ENCODE measurements at regions of chr3 and their contacts with region 1.

Region 1: DNA sequence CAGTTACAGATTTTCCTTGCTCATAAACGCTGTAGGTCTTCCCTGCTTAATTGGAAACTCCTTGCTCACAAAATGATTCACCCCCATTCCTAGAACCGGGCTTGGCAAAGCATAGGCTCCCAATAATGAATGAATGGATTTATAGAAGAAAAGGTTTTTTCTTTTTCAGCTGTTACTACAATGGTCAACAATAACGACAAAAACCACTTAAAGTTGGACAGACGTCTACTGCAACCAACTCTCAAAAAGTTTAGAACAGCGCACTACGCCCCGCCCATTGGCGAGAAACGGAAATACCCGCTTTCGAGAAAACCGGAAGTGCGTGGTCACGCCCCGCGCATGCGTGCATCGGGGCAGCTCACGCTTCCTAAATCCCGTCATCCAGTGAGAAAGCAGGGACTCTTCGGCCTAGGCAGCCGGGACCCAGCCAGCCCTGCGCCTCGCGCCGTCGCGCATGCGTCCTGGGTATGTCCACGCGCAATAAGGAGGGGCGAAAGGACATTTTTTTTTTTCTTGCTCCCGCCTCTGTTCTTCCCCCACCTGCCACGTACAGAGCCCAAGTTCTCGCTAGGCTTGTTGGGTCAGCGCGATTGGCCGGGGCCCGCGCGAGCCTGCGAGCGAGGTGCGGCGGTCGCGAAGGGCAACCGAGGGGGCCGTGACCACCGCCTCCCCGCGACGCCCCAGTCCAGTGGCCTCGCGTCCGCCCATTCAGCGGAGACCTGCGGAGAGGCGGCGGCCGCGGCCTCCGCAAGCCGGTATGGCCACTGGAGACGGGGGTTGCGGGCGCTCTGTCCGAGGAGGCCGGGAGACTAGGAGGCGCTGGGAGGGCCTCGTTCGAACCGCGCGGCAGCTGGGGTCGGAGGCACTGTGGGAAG is at the start of gene TFG:
- DNase-seq: peak; percentile 94 to 100 (median 96)
- ATAC-seq: peak; percentile 91
- H3K4me3 ChIP-seq: peak within 1 kb of the TSS; percentile 73
- H3K4me3 Mint-ChIP-seq: peak within 1 kb of the TSS; percentile 97
- H3K27ac ChIP-seq: peak within 1 kb of the TSS; percentile 77 to 94
- H3K27ac Mint-ChIP-seq: peak within 1 kb of the TSS; percentile 97
- H3K4me1 ChIP-seq: peaks cover 24% of the 10 kb centered on the region
- H3K4me1 Mint-ChIP-seq: peaks cover 49% of the 10 kb centered on the region
- H3K27me3 ChIP-seq: no peaks in the 10 kb centered on the region
- H3K27me3 Mint-ChIP-seq: peaks cover 16% of the 10 kb centered on the region
- CTCF ChIP-seq: no peak
- total RNA-seq, gene TFG: 56.5 to 58.8 TPM

Region 2: GRCh38 chr3:98901392-98902350 is 1807.5 kb before region 1 on chr3 and contains the start of gene DCBLD2:
- CTCF ChIA-PET with region 1: no interaction called
- POLR2A ChIA-PET with region 1: interaction called, 3 read pairs
- intact Hi-C with region 1: loop called in 1 of 2 experiments (anchors 5 kb)
- DNase-seq: peak; percentile 79 to 96 (median 88)
- ATAC-seq: peak; percentile 98
- H3K4me3 ChIP-seq: peak within 1 kb of the TSS; percentile 67
- H3K4me3 Mint-ChIP-seq: peak within 1 kb of the TSS; percentile 93
- H3K27ac ChIP-seq: peak within 1 kb of the TSS in 1 of 2 donors; percentile 45
- H3K27ac Mint-ChIP-seq: peak within 1 kb of the TSS; percentile 76
- H3K4me1 ChIP-seq: peaks cover 13% of the 10 kb centered on the region
- H3K4me1 Mint-ChIP-seq: peaks cover 26% of the 10 kb centered on the region
- H3K27me3 ChIP-seq: peaks cover 0 to 2% of the 10 kb centered on the region in 2 experiments
- H3K27me3 Mint-ChIP-seq: peaks cover 12% of the 10 kb centered on the region
- CTCF ChIP-seq: no peak
- total RNA-seq, gene DCBLD2: 2.2 to 2.5 TPM

Region 3: DNA sequence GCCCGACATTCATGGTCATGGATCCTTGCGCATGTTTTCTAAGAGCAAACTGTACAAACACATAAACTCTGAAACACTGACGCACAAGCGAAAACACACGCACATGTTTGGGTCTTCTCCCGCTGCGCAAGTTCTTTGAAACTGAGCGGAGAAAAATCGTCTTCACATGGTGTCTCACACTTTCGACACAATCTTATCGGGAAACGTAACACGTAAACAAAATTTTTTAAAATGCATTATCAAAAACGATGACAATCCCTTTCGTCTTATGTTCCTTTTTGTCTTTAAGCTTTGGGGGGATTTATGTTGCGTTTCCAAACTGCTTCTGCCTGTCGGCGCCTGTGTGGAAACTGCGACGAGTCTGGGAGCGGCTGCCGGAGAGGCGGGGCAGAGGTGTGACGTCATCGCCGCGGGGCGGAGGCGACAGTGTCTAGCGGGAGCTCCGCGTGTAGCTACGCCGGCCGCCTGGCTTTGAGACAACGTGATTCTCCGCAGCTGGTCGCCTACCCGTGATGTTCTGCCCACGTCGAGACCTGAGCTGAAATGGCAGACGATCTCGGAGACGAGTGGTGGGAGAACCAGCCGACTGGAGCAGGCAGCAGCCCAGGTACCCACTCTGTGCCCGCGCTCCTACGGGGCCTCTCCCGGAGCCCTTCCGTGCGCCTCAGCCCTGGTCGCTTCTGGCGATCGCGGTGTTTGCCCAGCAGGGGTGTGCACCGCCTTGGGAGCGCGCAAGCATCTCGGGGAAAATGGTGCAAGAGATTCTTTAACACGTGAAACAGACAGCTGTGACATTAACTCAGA is 891.6 kb before region 1 on chr3 and contains the start of gene CMSS1:
- CTCF ChIA-PET with region 1: no interaction called
- POLR2A ChIA-PET with region 1: interaction called, 4 read pairs
- intact Hi-C with region 1: loop called in 1 of 2 experiments (anchors 5 kb)
- DNase-seq: peak; percentile 90 to 98 (median 96)
- ATAC-seq: peak; percentile 80
- H3K4me3 ChIP-seq: peak within 1 kb of the TSS; percentile 71
- H3K4me3 Mint-ChIP-seq: peak within 1 kb of the TSS; percentile 97
- H3K27ac ChIP-seq: peak within 1 kb of the TSS; percentile 76 to 86
- H3K27ac Mint-ChIP-seq: peak within 1 kb of the TSS; percentile 100
- H3K4me1 ChIP-seq: peaks cover 15% of the 10 kb centered on the region
- H3K4me1 Mint-ChIP-seq: peaks cover 48% of the 10 kb centered on the region
- H3K27me3 ChIP-seq: no peaks in the 10 kb centered on the region
- H3K27me3 Mint-ChIP-seq: no peaks in the 10 kb centered on the region
- CTCF ChIP-seq: no peak
- total RNA-seq, gene CMSS1: 12.2 TPM

Region 4: DNA sequence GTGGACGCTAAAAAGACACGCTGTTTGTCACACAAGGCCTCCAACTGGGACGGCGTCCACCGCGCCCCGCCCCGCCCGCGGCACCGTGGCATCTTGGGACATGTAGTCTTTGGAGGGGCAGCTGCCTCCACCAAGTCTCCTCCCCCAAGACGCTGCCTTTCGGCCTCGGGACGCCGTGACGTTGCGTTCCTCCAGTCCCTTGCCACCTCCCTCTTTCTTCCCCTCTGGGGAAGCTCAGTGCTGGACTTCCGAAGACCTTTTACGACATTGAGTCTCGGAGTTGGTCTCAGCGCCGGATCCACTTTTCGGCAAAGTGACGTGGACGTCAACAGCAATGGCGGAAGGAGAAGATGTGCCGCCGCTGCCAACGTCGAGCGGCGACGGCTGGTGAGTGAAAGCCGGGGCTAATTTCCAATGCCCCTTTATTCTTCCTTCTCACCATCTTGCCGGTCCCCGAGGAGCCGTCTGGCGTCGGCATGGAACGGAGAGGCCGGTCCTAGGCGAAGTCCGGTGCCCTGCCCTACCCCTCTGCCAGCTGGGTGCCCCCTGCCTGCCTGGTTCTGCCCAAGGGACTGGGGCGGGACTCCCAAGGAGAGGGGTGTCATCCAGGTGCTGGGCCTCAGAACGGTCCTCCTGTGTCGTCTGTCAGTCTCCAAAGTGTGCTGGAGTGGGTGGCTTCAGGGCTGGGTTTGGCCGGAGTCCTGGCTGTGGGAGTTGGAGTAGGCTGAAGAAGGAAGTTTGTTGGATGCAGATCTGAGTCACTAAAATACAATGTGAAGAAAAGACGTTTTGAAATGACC is 448.3 kb before region 1 on chr3 and contains the start of gene TBC1D23:
- CTCF ChIA-PET with region 1: no interaction called
- POLR2A ChIA-PET with region 1: interaction called, 16 read pairs
- intact Hi-C with region 1: loop called in 1 of 2 experiments (anchors 2 kb)
- DNase-seq: peak; percentile 93 to 99 (median 96)
- ATAC-seq: peak; percentile 99
- H3K4me3 ChIP-seq: peak within 1 kb of the TSS; percentile 96
- H3K4me3 Mint-ChIP-seq: peak within 1 kb of the TSS; percentile 96
- H3K27ac ChIP-seq: peak within 1 kb of the TSS; percentile 78 to 97
- H3K27ac Mint-ChIP-seq: peak within 1 kb of the TSS; percentile 94
- H3K4me1 ChIP-seq: peaks cover 26% of the 10 kb centered on the region
- H3K4me1 Mint-ChIP-seq: peaks cover 64% of the 10 kb centered on the region
- H3K27me3 ChIP-seq: no peaks in the 10 kb centered on the region
- H3K27me3 Mint-ChIP-seq: no peaks in the 10 kb centered on the region
- CTCF ChIP-seq: no peak
- total RNA-seq, gene TBC1D23: 31.8 to 34.8 TPM

Region 5: GRCh38 chr3:100316641-100317069 is 392.5 kb before region 1 on chr3:
- CTCF ChIA-PET with region 1: no interaction called
- POLR2A ChIA-PET with region 1: no interaction called
- intact Hi-C with region 1: loop called in 1 of 2 experiments (anchors 10 kb)
- DNase-seq: peak in 9 of 14 experiments; percentile 12 to 74 (median 21)
- ATAC-seq: peak; percentile 89
- H3K4me3 ChIP-seq: no peak overlapping the region
- H3K4me3 Mint-ChIP-seq: no peak overlapping the region
- H3K27ac ChIP-seq: no peak overlapping the region
- H3K27ac Mint-ChIP-seq: no peak overlapping the region
- H3K4me1 ChIP-seq: peaks cover 3% of the 10 kb centered on the region
- H3K4me1 Mint-ChIP-seq: peaks cover 5% of the 10 kb centered on the region
- H3K27me3 ChIP-seq: no peaks in the 10 kb centered on the region
- H3K27me3 Mint-ChIP-seq: no peaks in the 10 kb centered on the region
- CTCF ChIP-seq: peak; percentile 48

Region 6: DNA sequence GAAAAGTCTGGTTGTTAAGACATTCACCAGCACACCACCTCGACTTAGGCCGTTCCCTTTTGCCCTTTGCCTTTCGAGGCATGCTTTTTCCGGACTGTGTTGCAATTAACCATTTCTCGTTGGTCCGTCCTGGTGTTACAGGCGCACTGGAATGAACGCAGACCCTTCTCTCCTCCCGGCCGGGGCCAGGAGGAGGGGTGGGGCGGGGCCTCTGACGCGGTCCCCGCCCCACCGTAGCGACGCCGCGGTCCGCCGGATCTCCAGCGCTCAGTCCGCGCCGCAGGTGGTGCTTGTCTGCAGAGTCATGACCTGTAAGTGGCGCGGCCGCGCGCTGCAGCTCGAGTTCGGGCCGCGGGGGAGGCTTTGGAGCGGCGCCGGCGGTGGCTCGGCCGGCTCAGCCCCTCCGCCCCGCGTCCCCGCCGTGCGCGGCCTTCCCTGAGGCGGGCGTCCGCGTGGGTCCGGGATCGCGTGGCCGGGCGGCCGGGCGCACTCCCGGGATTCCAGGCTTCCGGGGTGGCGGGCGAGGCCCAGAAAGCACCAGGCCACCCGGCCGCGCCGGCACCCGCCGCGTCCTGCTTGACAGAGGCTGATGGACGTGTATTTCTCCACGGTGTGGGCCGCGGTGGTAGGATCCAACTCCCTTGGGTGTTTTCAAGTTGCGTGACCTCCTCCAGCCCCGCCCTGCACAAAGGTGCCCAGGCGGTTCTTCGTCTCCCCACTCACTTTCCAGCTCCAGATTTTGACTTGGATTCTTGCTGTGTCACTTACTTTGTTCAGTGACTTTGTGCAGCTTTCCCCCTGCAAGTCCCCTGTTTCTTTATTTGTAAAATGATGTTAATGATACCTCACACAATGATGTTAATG is 374.5 kb before region 1 on chr3 and contains the start of gene NIT2:
- CTCF ChIA-PET with region 1: no interaction called
- POLR2A ChIA-PET with region 1: interaction called, 7 read pairs
- intact Hi-C with region 1: loop called in 1 of 2 experiments (anchors 10 kb)
- DNase-seq: peak; percentile 59 to 91 (median 74)
- ATAC-seq: peak; percentile 94
- H3K4me3 ChIP-seq: peak within 1 kb of the TSS; percentile 81
- H3K4me3 Mint-ChIP-seq: peak within 1 kb of the TSS; percentile 93
- H3K27ac ChIP-seq: peak within 1 kb of the TSS; percentile 29 to 70
- H3K27ac Mint-ChIP-seq: peak within 1 kb of the TSS; percentile 83
- H3K4me1 ChIP-seq: peaks cover 17% of the 10 kb centered on the region
- H3K4me1 Mint-ChIP-seq: peaks cover 30% of the 10 kb centered on the region
- H3K27me3 ChIP-seq: no peaks in the 10 kb centered on the region
- H3K27me3 Mint-ChIP-seq: no peaks in the 10 kb centered on the region
- CTCF ChIP-seq: no peak
- total RNA-seq, gene NIT2: 18.6 to 21.4 TPM

Region 7: GRCh38 chr3:101685870-101686412 is 976.7 kb after region 1 on chr3:
- CTCF ChIA-PET with region 1: no interaction called
- POLR2A ChIA-PET with region 1: no interaction called
- intact Hi-C with region 1: loop called in 1 of 2 experiments (anchors 10 kb)
- DNase-seq: peak in 4 of 14 experiments; percentile 7 to 40 (median 26)
- ATAC-seq: peak; percentile 5
- H3K4me3 ChIP-seq: peak overlapping the region; percentile 91
- H3K4me3 Mint-ChIP-seq: peak overlapping the region; percentile 99
- H3K27ac ChIP-seq: peak overlapping the region; percentile 87 to 94
- H3K27ac Mint-ChIP-seq: peak overlapping the region; percentile 99
- H3K4me1 ChIP-seq: peaks cover 30% of the 10 kb centered on the region
- H3K4me1 Mint-ChIP-seq: peaks cover 49% of the 10 kb centered on the region
- H3K27me3 ChIP-seq: no peaks in the 10 kb centered on the region
- H3K27me3 Mint-ChIP-seq: no peaks in the 10 kb centered on the region
- CTCF ChIP-seq: no peak

Measured in CD4-positive, alpha-beta T cell (primary cell).